ENCODE measurements at regions of chr16 and their contacts with region 1.

Region 1: GRCh38 chr16:4402439-4403132 is 13.8 kb downstream of the CORO7 start:
- DNase-seq: peak; percentile 68 to 85
- H3K4me3 ChIP-seq: no peak overlapping the region
- H3K4me3 Mint-ChIP-seq: no peak overlapping the region
- H3K27ac Mint-ChIP-seq: no peak overlapping the region
- H3K4me1 ChIP-seq: no peaks in the 10 kb centered on the region
- H3K4me1 Mint-ChIP-seq: no peaks in the 10 kb centered on the region
- H3K27me3 ChIP-seq: no peaks in the 10 kb centered on the region
- H3K27me3 Mint-ChIP-seq: no peaks in the 10 kb centered on the region
- CTCF ChIP-seq: peak; percentile 84 to 87

Region 2: DNA sequence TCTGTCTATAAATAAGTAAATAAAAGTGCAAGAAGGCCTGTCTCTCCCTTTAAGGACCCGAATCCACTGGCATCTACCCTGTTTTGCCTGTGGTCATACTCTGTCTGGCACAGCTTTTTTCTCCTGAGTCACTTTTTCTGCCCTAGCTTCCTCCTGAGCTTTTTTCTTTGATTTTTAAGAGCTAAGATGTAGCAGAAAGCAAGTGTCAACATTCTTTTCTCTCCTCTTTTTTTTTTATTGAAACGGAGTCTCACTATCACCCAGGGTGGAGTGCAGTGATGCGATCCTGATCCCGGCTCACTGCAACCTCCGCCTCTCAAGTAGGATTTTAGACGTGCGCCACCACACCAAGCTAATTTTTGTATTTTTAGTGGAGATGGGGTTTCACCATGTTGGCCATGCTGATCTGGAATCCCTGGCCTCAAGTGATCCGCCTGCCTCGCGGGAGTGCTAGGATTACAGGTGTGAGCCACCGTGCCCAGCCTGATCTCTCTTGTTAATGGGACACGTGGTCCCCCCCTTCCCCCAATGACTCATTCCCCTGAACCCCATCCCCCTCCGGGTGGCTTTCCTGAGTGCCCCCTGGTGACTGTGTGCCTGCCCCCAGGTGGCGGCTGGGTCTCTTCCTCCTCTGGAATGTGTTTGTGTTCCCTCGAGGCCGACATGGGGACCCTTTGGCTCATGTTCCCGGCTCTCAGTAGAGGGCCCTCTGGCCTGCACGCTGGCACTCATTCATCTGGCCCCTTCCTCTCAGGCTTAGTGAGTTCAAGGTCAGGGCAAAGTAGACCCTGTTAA is 921.5 kb before region 1 on chr16:
- CTCF ChIA-PET with region 1: no interaction called
- POLR2A ChIA-PET with region 1: no interaction called
- intact Hi-C with region 1: no loop called
- DNase-seq: no peak
- H3K4me3 ChIP-seq: no peak overlapping the region
- H3K4me3 Mint-ChIP-seq: no peak overlapping the region
- H3K27ac Mint-ChIP-seq: no peak overlapping the region
- H3K4me1 ChIP-seq: no peaks in the 10 kb centered on the region
- H3K4me1 Mint-ChIP-seq: no peaks in the 10 kb centered on the region
- H3K27me3 ChIP-seq: no peaks in the 10 kb centered on the region
- H3K27me3 Mint-ChIP-seq: no peaks in the 10 kb centered on the region
- CTCF ChIP-seq: no peak

Region 3: DNA sequence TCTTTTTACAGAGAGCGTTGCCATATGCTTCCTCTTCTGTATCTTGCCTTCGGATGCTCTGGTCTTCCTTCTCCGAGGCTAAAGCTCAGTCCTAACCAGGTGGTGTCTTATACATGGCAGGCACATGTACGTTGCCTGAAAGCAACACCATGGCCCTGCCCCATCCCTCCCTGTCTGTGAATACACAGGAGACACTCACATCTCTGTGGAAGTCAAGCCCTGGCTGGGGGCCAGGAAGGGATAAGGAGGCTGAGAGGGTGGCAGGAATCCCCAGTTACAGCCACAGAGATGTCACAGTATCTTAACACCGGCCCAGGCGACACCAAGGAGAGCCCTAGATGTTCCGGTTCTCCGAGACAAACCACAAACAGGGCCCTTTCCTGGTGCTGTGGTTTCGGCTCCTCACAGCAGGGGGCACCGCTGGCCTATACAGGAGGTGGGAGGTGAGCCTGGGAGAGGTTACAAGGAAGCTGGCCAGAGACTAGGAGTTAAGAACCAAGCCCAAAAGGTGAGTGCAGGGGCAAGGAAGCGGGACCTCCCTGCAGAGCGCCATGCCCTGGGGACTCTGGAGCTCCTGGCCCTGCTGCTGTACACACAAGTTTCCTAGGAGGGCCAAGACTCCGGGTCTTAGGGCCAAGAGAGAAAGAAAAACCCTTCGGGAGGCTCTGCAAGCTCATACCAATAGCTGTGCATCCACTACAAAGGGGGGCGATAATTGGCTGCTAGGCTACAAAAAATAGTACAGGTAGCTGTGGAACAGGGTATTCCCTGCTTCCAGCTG is 202.4 kb before region 1 on chr16:
- CTCF ChIA-PET with region 1: interaction called, 14 read pairs
- POLR2A ChIA-PET with region 1: no interaction called
- intact Hi-C with region 1: no loop called
- DNase-seq: peak; percentile 73 to 78
- H3K4me3 ChIP-seq: no peak overlapping the region
- H3K4me3 Mint-ChIP-seq: no peak overlapping the region
- H3K27ac Mint-ChIP-seq: peak overlapping the region; percentile 25
- H3K4me1 ChIP-seq: no peaks in the 10 kb centered on the region
- H3K4me1 Mint-ChIP-seq: no peaks in the 10 kb centered on the region
- H3K27me3 ChIP-seq: no peaks in the 10 kb centered on the region
- H3K27me3 Mint-ChIP-seq: no peaks in the 10 kb centered on the region
- CTCF ChIP-seq: peak; percentile 64 to 88

Region 4: DNA sequence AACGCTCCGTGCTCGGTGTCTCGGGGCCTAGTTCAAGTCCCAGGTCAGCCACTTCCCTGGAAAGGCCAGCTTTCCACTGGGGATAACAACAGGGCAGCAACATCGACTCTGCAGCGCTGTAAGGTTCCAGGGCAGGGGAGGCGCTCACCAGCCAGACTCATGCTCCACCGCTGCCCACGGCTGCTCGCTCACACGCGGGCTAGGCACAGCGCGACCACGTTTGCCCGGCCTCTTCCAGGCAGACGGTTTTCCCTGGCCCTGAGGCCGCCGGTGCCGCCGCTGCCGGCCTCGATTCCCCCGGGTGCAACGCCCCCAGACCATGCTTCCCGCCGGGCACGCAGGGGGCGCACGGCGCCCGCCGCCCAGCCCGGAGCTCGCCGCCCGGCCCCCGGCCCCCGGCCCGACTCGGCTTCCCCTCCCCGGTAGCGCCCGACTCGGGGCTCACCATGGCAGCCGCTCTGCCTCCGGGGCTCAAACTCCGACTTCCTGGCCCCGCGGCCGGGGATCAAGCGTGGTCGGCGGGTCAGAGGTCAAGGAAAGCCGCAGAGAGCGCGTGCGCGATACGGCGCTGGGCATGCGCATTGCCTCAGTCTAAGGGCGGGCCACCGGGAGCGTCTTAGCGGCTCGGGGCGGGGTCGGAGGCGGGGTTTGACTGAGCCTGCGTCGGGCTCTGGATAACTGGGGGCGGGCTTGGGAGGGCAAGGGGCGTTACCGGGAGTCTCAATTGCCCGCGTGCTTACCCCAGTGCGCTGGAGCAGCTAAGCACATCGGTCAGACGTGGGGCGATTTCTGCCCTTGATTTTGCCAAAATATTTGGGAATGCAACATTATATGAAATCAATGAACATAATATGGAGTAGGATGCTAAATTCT is 51.6 kb before region 1 on chr16 and contains the start of gene PAM16:
- CTCF ChIA-PET with region 1: interaction called, 15 read pairs
- POLR2A ChIA-PET with region 1: no interaction called
- intact Hi-C with region 1: no loop called
- DNase-seq: peak; percentile 96 to 97
- H3K4me3 ChIP-seq: peak within 1 kb of the TSS; percentile 59
- H3K4me3 Mint-ChIP-seq: peak within 1 kb of the TSS; percentile 83
- H3K27ac Mint-ChIP-seq: peak within 1 kb of the TSS; percentile 87
- H3K4me1 ChIP-seq: no peaks in the 10 kb centered on the region
- H3K4me1 Mint-ChIP-seq: no peaks in the 10 kb centered on the region
- H3K27me3 ChIP-seq: no peaks in the 10 kb centered on the region
- H3K27me3 Mint-ChIP-seq: no peaks in the 10 kb centered on the region
- CTCF ChIP-seq: no peak
- total RNA-seq, gene PAM16: 74.1 and 76.5 TPM in 2 replicates

Region 5: DNA sequence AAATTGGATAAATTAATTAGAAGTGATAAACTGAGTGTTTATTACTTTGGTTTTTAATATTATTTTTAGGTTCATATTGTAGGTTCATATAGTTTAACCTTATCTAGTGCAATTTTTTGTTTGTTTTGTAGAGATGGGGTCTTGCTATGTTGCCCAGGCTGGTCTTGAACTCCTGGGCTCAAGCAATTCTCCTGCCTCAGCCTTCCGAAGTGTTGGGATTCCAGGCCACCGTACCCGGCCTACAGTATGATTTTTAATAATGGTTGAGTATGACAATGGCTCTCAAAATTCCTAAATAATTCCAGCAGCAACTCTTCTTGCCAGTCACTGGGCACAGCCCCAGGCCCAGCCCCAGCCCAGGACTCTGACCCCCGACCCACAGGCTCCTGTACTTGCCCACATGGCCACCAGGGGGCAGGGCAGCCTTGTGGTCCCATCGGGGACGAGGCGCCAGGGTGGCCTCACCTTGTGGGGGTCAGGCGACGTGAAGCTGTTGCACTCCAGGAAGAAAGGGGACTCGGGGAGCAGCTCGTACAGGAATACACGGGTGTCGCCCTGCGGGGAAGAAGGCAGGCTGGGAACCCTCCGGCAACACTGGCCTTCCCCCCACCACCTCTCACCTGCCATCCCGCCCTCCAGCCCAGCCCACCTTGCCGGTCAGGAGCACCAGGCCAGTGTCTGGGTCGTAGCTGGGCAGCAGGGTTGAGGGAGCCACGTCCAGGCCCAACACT is 43.6 kb before region 1 on chr16:
- CTCF ChIA-PET with region 1: interaction called, 29 read pairs
- POLR2A ChIA-PET with region 1: no interaction called
- intact Hi-C with region 1: loop called (anchors 1 kb)
- DNase-seq: peak in 1 of 2 experiments; percentile 80
- H3K4me3 ChIP-seq: no peak overlapping the region
- H3K4me3 Mint-ChIP-seq: no peak overlapping the region
- H3K27ac Mint-ChIP-seq: no peak overlapping the region
- H3K4me1 ChIP-seq: no peaks in the 10 kb centered on the region
- H3K4me1 Mint-ChIP-seq: no peaks in the 10 kb centered on the region
- H3K27me3 ChIP-seq: no peaks in the 10 kb centered on the region
- H3K27me3 Mint-ChIP-seq: no peaks in the 10 kb centered on the region
- CTCF ChIP-seq: peak; percentile 87 to 94

Region 6: GRCh38 chr16:4475880-4476788 is 73.5 kb after region 1 on chr16 and contains the start of gene HMOX2:
- CTCF ChIA-PET with region 1: interaction called, 10 read pairs
- POLR2A ChIA-PET with region 1: no interaction called
- intact Hi-C with region 1: no loop called
- DNase-seq: peak; percentile 94 to 96
- H3K4me3 ChIP-seq: peak within 1 kb of the TSS; percentile 72
- H3K4me3 Mint-ChIP-seq: peak within 1 kb of the TSS; percentile 90
- H3K27ac Mint-ChIP-seq: peak within 1 kb of the TSS; percentile 94
- H3K4me1 ChIP-seq: peaks cover 5% of the 10 kb centered on the region
- H3K4me1 Mint-ChIP-seq: no peaks in the 10 kb centered on the region
- H3K27me3 ChIP-seq: no peaks in the 10 kb centered on the region
- H3K27me3 Mint-ChIP-seq: no peaks in the 10 kb centered on the region
- CTCF ChIP-seq: peak in 1 of 2 experiments; percentile 51
- total RNA-seq, gene HMOX2: 35.7 and 36.7 TPM in 2 replicates